Tibial artery (tissue), 4 donors: ENCODE measurements at regions of chr4 and their contacts with region 1.

Region 1: DNA sequence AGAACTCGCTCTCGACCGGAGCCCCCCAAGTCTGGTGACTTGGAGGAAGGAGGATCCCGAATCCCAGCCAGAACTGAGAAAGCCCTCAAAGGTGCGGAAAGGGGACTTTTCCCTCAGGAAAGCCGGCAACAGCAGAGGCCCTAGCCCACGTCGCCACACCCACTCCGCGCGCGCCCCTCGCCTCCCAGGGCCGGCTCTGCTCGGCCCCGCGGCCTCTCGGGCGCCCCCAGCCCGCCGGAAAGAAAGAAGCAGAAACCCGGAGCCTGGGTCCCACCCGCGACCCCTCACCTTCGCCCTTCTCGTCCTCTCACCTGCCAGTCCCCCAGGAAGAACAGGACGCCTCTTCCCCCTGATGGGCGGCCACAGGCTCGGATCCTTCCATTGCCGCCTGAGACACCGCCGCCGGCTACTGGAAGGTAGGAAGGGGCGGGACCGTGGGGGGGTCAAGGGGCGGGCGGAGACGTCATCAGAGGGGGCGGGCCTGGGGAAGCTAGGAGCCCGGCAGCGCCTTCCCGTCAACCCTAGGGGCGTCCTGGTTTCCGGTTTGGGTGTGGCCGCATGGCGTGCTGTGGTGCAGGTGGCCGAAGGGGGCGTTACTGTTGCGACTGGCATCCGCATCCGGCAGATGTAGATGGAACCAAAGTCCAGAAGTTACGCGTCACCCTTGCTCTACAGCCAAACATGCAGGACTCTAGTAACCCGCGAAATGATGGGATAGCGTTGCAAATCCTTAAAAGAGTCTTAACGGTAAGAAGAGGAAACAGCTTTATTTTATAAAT is at the start of gene UBA6:
- DNase-seq: peak; percentile 94 to 96
- H3K4me3 ChIP-seq: peak within 1 kb of the TSS; percentile 85 to 97
- H3K27ac ChIP-seq: peak within 1 kb of the TSS; percentile 90 to 98
- H3K4me1 ChIP-seq: peaks cover 0 to 14% (median 7%) of the 10 kb centered on the region in 4 donors
- H3K27me3 ChIP-seq: no peaks in the 10 kb centered on the region
- CTCF ChIP-seq: peak; percentile 37 to 38

Region 2: DNA sequence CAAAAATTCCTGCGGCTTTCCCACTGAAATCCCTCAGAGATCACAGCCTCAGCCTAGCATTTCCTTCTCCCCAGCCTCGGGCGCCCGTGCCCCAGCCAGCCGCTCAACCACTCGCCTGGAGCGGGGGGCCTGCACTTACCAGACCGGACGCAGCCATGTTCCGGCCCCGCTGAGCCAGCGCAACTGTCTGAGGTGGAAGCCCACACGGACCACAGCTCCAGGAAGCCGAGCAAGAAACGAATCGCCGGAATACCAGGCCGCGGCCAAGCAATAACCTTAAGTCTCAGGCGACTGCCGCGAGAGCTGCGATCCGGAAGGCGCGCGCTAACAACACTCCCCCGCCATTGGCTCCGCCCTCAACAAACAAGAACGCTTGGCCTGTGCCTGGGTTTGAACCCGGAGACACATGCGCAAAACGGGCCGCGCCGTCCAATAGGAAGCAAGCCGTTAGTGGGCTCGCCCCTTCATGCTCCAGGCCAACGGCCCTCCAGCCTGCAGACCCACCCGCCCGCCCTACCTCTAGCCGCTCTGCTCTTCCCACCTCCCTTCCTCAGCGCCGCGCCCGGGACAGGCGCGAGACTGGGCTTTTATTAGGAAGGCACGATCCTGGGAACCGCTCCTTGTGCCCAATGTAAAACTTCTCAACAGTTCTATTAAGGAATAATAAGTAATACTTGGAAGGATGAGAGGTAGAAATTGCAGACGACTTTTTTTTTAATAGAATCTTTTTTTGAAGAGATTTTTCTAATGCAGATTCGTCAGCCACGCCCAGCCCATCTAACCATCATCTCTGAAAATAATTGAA is 155.5 kb before region 1 on chr4 and contains the start of gene CENPC:
- intact Hi-C with region 1: loop called (anchors 2 kb)
- DNase-seq: peak; percentile 98
- H3K4me3 ChIP-seq: peak within 1 kb of the TSS; percentile 72 to 82
- H3K27ac ChIP-seq: peak within 1 kb of the TSS; percentile 78 to 95
- H3K4me1 ChIP-seq: peaks cover 0 to 36% (median 4%) of the 10 kb centered on the region in 4 donors
- H3K27me3 ChIP-seq: no peaks in the 10 kb centered on the region
- CTCF ChIP-seq: no peak